ENCODE measurements at regions of chr3 and their contacts with region 1.

Region 1: GRCh38 chr3:19146685-19147650 is 1.3 kb upstream of the KCNH8 start:
- DNase-seq: peak; percentile 91
- H3K4me3 ChIP-seq: peak overlapping the region; percentile 72
- H3K27ac ChIP-seq: peak overlapping the region; percentile 68
- H3K4me1 ChIP-seq: peaks cover 11% of the 10 kb centered on the region
- CTCF ChIP-seq: peak; percentile 76

Region 2: GRCh38 chr3:19103510-19103909 is 43.5 kb before region 1 on chr3:
- CTCF ChIA-PET with region 1: no interaction called
- POLR2A ChIA-PET with region 1: no interaction called
- intact Hi-C with region 1: loop called (anchors 5 kb)
- DNase-seq: peak; percentile 22
- H3K4me3 ChIP-seq: peak overlapping the region; percentile 66
- H3K27ac ChIP-seq: peak overlapping the region; percentile 15
- H3K4me1 ChIP-seq: peaks cover 6% of the 10 kb centered on the region
- CTCF ChIP-seq: no peak

Region 3: DNA sequence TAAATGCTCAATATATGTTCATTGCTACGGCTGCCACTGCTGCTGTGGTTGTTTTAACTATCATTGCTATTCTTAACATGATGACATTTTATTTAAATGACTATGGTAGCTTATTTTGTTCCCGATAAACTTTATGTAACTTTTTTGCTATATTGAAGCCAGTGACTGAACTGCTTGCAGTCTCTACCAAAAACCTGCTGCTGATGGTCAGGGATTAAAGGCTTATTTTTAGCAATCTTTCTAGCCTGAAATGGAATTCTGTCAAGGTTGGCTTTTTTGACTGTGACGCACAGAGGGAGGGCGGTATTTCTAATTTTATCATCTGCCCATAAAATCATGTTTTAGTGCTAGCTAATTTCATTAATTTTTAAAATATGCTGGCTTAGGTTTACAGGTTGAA is 273.2 kb after region 1 on chr3:
- CTCF ChIA-PET with region 1: no interaction called
- POLR2A ChIA-PET with region 1: no interaction called
- intact Hi-C with region 1: no loop called
- DNase-seq: no peak
- H3K4me3 ChIP-seq: no peak overlapping the region
- H3K27ac ChIP-seq: no peak overlapping the region
- H3K4me1 ChIP-seq: no peaks in the 10 kb centered on the region
- CTCF ChIP-seq: no peak